ENCODE measurements at regions of chr6 and their contacts with region 1.

Region 1: DNA sequence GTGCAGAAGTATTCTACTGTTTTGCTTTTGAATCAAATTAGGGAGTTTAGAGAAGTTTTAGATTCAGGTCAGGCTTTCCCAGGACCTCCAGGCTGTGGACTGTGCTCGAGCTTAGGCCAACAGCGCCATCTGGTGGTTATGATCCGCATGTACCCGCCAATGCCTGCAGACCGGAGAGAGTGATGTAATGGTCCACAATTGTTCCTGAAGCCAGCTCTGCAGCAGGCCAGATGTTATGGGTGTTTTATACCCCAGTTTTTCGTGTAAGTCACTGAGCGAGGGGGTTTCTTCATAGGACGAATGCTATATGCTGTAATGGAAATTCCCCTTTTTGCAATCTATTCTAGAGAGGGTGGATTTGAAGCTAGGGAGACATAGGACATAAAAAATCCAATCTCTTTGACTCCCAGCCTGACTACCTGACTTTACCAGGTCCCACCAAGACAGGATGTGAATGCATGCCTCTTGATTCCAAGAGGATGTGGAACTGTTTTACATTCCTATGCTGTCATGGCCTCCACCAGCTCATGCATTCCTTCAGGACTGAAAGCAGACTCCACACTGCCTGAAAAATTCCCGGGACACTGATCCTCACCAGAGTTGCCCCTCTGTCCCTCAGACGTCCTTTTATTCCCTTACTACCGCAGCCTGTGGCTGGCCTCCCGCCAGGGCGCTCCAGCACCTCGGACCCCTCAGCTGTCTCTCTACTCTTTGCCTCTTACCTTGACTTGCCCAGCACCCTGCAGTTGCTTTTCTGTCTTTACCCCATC is 41.2 kb upstream of the LY86 start:
- DNase-seq: peak; percentile 39
- ATAC-seq: peak; percentile 99
- H3K4me3 ChIP-seq: no peak overlapping the region
- H3K27ac ChIP-seq: no peak overlapping the region
- H3K4me1 ChIP-seq: no peaks in the 10 kb centered on the region
- H3K27me3 ChIP-seq: peaks cover 22% of the 10 kb centered on the region; the same call in 1 of the 2 replicates
- CTCF ChIP-seq: peak; percentile 62 to 93 (median 81)
- POLR2A ChIP-seq: no peak
- RAD21 ChIP-seq: peak; percentile 92

Region 2: DNA sequence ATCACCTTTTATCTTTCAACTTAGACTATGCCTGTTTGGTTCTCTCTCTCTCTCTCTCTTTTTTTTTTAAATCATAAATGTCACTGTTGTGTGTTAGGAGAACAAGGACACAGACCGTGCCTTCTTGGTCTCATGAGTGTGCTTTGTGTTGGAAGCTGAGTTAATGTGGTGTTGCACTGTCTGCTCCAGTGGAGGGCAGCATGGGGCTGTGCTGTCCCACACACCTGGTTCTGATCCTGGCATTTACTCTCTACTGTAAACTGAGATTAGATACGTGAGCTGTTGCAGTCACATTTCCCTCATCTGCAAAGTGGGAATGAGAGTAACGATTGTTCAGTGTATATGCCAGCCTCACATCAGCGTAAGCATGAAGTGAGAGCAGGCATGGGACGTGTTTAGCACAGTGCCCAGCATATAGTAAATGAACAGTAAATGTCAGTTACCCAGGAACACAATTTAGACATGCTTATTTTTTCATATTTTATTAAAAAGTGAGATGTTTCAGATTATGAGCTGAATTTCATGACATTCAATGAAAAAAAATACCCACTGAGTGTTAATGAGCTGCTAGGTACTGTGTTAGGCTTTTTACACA is 1124.9 kb before region 1 on chr6:
- CTCF ChIA-PET with region 1: interaction called, 6 read pairs
- POLR2A ChIA-PET with region 1: no interaction called
- RAD21 ChIA-PET with region 1: no interaction called
- intact Hi-C with region 1: loop called (anchors 5 kb)
- DNase-seq: peak; percentile 7
- ATAC-seq: peak; percentile 91
- H3K4me3 ChIP-seq: no peak overlapping the region
- H3K27ac ChIP-seq: no peak overlapping the region
- H3K4me1 ChIP-seq: no peaks in the 10 kb centered on the region
- H3K27me3 ChIP-seq: no peaks in the 10 kb centered on the region
- CTCF ChIP-seq: peak; percentile 36 to 54 (median 47); a peak in 5 of 6 replicates
- POLR2A ChIP-seq: no peak
- RAD21 ChIP-seq: peak; percentile 76

Region 3: GRCh38 chr6:5968817-5969734 is 578.2 kb before region 1 on chr6:
- CTCF ChIA-PET with region 1: interaction called, 6 read pairs
- POLR2A ChIA-PET with region 1: no interaction called
- RAD21 ChIA-PET with region 1: no interaction called
- intact Hi-C with region 1: loop called (anchors 5 kb)
- DNase-seq: peak; percentile 35
- ATAC-seq: peak; percentile 89
- H3K4me3 ChIP-seq: peak overlapping the region in 1 of 2 experiments; percentile 28; a peak in 2 of 4 replicates
- H3K27ac ChIP-seq: peak overlapping the region; percentile 19
- H3K4me1 ChIP-seq: peaks cover 20 to 32% of the 10 kb centered on the region in 2 experiments
- H3K27me3 ChIP-seq: no peaks in the 10 kb centered on the region
- CTCF ChIP-seq: no peak
- POLR2A ChIP-seq: no peak
- RAD21 ChIP-seq: 0 out of 2 replicates have a peak, but pooled peaks have one; percentile 24

Region 4: GRCh38 chr6:6057424-6058053 is 489.8 kb before region 1 on chr6:
- CTCF ChIA-PET with region 1: interaction called, 6 read pairs
- POLR2A ChIA-PET with region 1: no interaction called
- RAD21 ChIA-PET with region 1: no interaction called
- intact Hi-C with region 1: loop called (anchors 1 kb)
- DNase-seq: peak; percentile 35
- ATAC-seq: peak; percentile 92
- H3K4me3 ChIP-seq: no peak overlapping the region
- H3K27ac ChIP-seq: no peak overlapping the region
- H3K4me1 ChIP-seq: no peaks in the 10 kb centered on the region
- H3K27me3 ChIP-seq: peaks cover 28% of the 10 kb centered on the region
- CTCF ChIP-seq: peak; percentile 58 to 60 (median 59); a peak in 5 of 6 replicates
- POLR2A ChIP-seq: no peak
- RAD21 ChIP-seq: peak; percentile 67